ENCODE measurements at regions of chr11 and their contacts with region 1.

Region 1: DNA sequence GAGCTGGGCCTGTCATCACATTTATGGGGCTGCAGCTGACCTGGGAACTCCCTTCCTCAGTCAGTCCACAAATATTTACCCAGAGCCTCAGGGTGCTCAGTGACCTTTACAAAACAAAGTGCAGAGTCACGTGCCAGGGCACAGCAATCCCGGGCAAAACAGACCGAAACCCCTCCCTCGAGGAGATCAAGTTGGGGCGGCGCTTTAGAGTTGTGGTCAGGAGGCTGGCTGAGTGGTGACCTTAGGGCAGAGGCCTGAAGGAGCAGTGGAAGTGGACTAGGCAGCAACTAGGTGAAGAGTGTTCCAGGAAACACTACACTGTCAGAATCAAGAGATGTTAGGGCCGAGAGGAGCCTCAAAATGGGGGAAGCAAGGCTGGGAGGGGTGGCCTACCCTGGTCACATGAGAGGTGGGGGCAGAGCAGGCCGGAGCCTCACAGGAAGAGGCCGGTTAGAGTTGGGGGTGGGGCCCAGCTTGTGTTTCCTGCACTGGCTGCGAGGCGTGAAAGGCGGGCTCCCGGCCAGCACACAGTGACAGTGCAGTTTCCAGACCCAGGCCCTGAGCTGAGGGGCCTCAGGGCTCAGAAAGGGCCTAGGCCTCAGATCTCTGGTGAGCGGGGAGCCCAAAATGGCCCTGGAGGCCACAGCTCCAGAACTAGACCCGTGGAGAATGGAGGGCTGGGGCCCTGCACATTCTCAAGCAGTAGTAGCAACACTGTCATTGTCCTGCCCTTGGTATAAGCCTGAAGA is 3.7 kb upstream of the NEAT1 start:
- DNase-seq: peak; percentile 94 to 98
- ATAC-seq: peak; percentile 12 to 52
- H3K4me3 ChIP-seq: peak overlapping the region; percentile 30
- H3K27ac ChIP-seq: peak overlapping the region; percentile 97 to 100
- H3K4me1 ChIP-seq: peaks cover 52% of the 10 kb centered on the region
- CTCF ChIP-seq: no peak
- EP300 ChIP-seq: peak; percentile 76 to 83; a peak in 4 of 5 replicates
- POLR2A ChIP-seq: no peak; the same call in 1 of the 2 replicates
- RAD21 ChIP-seq: no peak

Region 2: DNA sequence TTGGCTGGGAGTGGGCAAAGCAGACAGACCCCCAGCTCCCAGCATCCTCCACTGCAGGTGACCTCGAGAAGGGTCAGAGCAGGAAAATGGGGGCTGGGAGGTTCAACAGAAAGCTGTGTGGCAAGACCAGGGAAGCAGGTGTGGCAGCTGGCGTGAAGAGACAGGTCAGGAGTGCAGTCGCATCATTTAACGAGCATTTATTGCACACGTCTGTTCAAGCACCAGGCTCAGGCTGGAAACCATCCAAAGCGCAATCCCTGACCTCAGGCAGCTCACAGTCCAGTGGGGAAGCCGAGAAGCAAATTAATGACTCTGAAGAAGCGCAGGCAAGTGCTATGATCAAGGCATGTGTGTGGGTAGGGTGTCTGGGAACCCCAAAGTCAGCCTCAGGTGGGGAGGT is 43.9 kb before region 1 on chr11:
- CTCF ChIA-PET with region 1: interaction called, 208 read pairs
- POLR2A ChIA-PET with region 1: interaction called, 14 read pairs
- DNase-seq: no peak
- ATAC-seq: no peak
- H3K4me3 ChIP-seq: no peak overlapping the region
- H3K27ac ChIP-seq: peak overlapping the region in 1 of 2 experiments; percentile 27; a peak in 2 of 6 replicates
- H3K4me1 ChIP-seq: peaks cover 44% of the 10 kb centered on the region
- CTCF ChIP-seq: no peak
- EP300 ChIP-seq: no peak
- POLR2A ChIP-seq: no peak
- RAD21 ChIP-seq: no peak

Region 3: DNA sequence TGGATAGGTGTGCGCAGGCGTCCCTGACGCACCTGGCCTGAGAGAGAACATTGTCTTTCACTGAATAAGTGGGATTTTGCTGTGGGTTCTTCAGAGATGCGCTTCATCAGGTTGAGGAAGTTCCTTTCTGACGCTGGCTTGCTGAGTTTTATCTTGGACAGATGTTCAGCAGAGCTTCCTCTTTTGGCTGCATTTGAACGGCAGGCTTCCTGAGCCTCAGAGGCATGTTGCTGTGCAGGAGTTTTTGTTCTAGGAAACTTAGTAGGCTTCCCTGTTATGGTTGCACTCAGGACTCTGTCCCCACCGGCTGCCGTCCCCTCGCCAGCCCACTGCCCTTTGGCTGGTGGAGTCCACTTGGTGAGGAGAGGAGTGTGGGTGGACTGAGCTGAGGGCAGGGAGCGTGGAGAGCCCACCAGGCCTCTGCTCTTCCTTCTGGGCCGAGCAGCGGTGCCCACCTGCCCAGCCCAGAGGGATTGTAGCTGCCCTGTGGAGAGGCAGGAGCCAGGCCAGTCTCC is 15.2 kb before region 1 on chr11:
- CTCF ChIA-PET with region 1: interaction called, 84 read pairs
- POLR2A ChIA-PET with region 1: interaction called, 5 read pairs
- DNase-seq: no peak
- ATAC-seq: peak in 1 of 2 experiments; percentile 7; a peak in 1 of 6 replicates
- H3K4me3 ChIP-seq: no peak overlapping the region
- H3K27ac ChIP-seq: no peak overlapping the region
- H3K4me1 ChIP-seq: 0 out of 3 replicates have a peak, but pooled peaks cover 4% of the 10 kb centered on the region
- CTCF ChIP-seq: no peak
- EP300 ChIP-seq: no peak
- POLR2A ChIP-seq: no peak
- RAD21 ChIP-seq: no peak

Region 4: DNA sequence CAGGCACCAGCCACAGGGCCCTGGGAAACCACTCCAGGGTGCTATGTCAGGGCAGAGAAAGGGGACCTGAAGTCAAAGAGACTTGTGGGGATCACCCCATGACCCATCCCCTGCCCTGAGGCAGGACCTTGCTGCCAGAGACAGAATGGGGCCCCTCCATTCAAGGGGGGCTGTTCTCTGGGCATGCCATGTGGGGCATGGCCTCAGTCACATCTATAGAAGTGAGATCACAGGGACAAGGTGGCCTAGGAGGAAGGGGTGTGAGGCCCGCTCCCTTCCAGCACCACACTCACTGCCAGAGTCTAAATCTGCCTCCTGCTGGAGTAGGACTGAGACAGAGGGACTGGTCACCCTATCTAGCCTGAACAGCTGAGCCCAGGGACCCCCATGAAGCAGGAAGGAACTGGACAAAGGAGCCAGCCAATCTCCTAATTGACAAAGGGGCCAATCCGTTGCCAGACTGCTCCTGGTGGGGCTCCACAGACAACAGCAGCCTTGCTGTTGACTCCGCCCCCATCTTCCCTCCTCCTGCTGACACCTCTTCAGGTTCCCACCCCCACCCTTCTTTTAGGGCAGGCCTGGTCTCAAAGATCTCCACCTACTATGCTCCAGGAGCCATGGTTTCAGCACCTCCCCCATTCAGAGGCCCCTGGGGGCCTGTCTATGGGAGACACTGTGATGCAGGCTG is 29.7 kb after region 1 on chr11:
- CTCF ChIA-PET with region 1: interaction called, 18 read pairs
- POLR2A ChIA-PET with region 1: interaction called, 11 read pairs
- DNase-seq: peak in 1 of 2 experiments; percentile 64
- ATAC-seq: peak; percentile 6 to 24; a peak in 5 of 6 replicates
- H3K4me3 ChIP-seq: no peak overlapping the region
- H3K27ac ChIP-seq: peak overlapping the region in 1 of 2 experiments; percentile 76; a peak in 3 of 6 replicates
- H3K4me1 ChIP-seq: peaks cover 71% of the 10 kb centered on the region
- CTCF ChIP-seq: no peak
- EP300 ChIP-seq: no peak
- POLR2A ChIP-seq: no peak
- RAD21 ChIP-seq: no peak

Region 5: DNA sequence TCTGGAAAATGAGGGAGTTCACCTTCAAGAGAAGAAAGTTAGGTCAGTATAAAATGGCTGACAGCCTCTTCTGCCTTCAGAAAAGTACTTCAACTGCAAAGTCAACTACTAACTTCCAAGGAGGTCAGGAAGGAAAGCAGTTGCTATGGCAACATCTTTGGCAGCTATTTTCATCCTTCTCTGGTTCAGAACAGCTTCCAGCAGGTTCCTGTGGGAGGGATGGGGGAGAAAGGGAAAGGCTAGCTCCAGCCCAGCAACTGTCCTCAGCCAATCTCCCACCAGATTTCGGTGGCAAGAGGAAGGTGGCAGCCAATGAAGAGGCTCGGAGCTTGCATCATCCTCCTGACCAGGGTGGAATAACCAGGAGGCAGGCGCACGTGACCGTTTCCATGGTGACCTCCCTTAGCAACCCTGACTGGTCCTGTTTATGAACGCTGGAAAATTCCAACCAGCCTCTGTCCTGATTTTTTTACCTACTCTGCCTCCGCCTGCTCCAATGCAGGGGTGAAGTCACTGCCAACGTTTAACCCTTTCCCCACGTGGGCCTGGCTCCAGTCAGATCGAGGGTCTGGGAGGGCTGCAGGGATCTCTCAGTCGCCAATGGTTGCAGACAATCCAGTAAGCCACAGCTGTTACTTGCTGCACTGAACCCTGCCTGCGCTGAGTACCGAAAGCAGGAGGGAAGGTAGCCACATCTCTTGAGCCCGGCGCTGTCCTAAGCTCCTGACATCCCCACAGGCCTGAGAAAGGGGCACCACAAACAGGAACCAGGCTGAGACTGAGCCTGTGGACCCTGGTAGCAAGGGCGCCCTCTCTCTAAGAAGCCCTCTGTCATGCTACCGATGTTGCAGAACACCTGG is 68.8 kb after region 1 on chr11:
- CTCF ChIA-PET with region 1: interaction called, 5 read pairs
- POLR2A ChIA-PET with region 1: interaction called, 75 read pairs
- DNase-seq: peak; percentile 99 to 100
- ATAC-seq: peak; percentile 75 to 83
- H3K4me3 ChIP-seq: 0 out of 3 replicates have a peak overlapping the region, but pooled peaks have one; percentile 3
- H3K27ac ChIP-seq: peak overlapping the region; percentile 99 to 100
- H3K4me1 ChIP-seq: peaks cover 82% of the 10 kb centered on the region
- CTCF ChIP-seq: no peak
- EP300 ChIP-seq: peak in 1 of 2 experiments; percentile 51; a peak in 2 of 5 replicates
- POLR2A ChIP-seq: no peak
- RAD21 ChIP-seq: no peak; a peak in 1 of 5 replicates